HepG2 (cell line): ENCODE measurements at regions of chr14 and their contacts with region 1.

Region 1: DNA sequence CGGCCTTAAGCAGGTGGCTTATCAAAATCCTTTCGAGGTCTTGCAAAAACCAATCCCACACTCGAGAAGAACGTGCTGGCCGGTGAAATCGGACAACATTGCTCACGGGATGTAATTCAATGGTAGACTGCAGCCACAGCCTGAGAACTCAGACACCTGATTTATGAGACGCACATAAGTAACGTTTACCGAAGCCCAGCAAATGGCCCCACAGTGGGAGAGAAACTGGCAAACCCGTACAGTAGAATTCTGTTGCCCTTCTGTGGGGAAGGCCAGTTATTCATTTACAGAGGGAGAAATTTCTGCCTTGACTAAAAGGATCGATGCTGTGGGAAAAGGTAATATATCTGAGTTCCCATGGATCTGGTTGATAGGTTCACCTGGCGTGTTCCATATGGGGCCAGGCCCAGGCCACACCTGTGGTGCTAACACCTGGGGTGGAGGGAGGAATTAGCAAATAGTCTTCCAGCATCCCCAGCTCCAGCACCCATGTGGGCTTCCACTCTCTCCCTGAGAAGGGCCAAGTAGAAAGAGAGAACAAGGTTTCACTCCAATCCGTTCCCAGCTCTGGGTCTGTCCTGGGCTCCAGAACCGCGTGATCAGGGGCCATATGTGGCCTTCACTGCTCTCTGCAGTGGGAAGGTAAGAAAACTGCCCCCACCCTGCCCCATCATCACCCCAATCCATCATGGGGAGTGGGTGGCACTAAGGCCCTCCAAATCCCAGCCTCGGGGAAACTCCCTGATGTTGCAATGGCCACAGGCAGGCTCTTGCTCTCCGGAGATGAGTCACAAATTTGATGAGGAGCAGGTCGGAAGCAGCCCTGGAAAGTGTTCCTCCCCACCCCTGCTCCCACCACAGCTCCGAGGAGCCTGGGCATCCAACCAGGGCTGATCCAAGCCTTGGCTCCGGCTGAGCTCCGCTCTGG is 12.7 kb downstream of the BDKRB1 start:
- DNase-seq: no peak
- ATAC-seq: peak; percentile 74
- H3K4me3 ChIP-seq: peak overlapping the region in 1 of 3 experiments; percentile 2; a peak in 1 of 6 replicates
- H3K27ac ChIP-seq: no peak overlapping the region
- H3K4me1 ChIP-seq: peaks cover 22% of the 10 kb centered on the region
- H3K27me3 ChIP-seq: peaks cover 0 to 13% of the 10 kb centered on the region in 2 experiments; a peak in 1 of 5 replicates
- CTCF ChIP-seq: no peak
- EP300 ChIP-seq: no peak
- POLR2A ChIP-seq: no peak
- RAD21 ChIP-seq: no peak

Region 2: GRCh38 chr14:96204151-96205058 is 64.3 kb before region 1 on chr14 and contains the start of gene BDKRB2:
- CTCF ChIA-PET with region 1: no interaction called
- POLR2A ChIA-PET with region 1: no interaction called
- in situ Hi-C with region 1: no loop called
- intact Hi-C with region 1: loop called (anchors 10 kb)
- DNase-seq: peak; percentile 54
- ATAC-seq: peak; percentile 90
- H3K4me3 ChIP-seq: peak within 1 kb of the TSS; percentile 1 to 42 (median 34); a peak in 5 of 6 replicates
- H3K27ac ChIP-seq: no peak within 1 kb of the TSS
- H3K4me1 ChIP-seq: peaks cover 33% of the 10 kb centered on the region
- H3K27me3 ChIP-seq: peaks cover 6 to 7% of the 10 kb centered on the region in 2 experiments; a peak in 3 of 5 replicates
- CTCF ChIP-seq: no peak
- EP300 ChIP-seq: no peak
- POLR2A ChIP-seq: no peak
- RAD21 ChIP-seq: no peak
- total RNA-seq, gene BDKRB2: not detected in 2 replicates